MCF 10A (cell line): ENCODE measurements at regions of chr11 and their contacts with region 1.

Region 1: DNA sequence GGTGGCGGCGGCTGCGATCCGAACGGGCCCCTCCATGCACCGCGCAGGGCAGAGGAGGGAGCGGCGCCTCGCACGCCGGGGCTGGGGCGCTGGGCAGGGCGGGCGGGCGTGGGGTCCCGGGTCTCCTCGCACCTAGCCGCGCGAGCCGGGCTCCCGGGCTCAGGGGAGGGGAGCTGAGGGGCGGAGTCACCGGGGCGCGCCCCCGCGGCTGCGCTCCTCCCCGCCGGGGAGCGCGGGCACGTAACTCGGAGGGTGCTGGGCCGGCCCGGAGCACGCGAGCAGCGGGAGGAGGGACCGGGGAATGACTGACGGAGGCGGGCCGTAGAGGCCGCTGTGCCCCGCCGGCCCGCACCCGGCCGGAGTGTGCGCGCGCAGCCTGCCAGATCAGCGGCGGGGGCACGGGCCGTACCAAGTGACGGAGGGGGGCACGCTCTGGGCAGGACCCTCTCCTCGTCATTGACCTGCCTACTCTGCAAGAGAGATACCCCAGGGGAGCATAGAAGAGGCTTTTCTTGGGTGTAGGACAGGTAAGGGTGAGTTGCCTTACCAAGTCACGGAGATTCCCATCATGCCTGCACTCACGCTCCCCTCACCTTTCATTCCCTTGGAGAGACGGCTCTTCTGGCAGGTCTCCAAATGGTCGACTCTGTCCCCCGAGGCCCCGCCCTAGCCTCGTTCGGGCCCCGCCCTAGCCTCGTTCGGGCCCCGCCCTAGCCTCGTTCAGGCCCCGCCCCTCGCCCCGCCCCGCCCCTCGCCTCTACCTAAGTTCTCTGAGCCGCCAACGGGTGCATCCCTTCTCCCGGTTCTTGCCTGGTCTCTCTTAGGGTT is at the start of gene CDON:
- DNase-seq: peak; percentile 92
- H3K4me3 Mint-ChIP-seq: peak within 1 kb of the TSS; percentile 74
- H3K27ac Mint-ChIP-seq: peak within 1 kb of the TSS; percentile 98
- H3K4me1 Mint-ChIP-seq: peaks cover 6% of the 10 kb centered on the region
- H3K27me3 Mint-ChIP-seq: no peaks in the 10 kb centered on the region
- CTCF ChIP-seq: no peak
- total RNA-seq, gene CDON: 0.91 and 0.96 TPM in 2 replicates

Region 2: GRCh38 chr11:125239585-125240560 is 823.0 kb before region 1 on chr11:
- CTCF ChIA-PET with region 1: no interaction called
- POLR2A ChIA-PET with region 1: no interaction called
- intact Hi-C with region 1: no loop called
- DNase-seq: no peak
- H3K4me3 Mint-ChIP-seq: no peak overlapping the region
- H3K27ac Mint-ChIP-seq: no peak overlapping the region
- H3K4me1 Mint-ChIP-seq: no peaks in the 10 kb centered on the region
- H3K27me3 Mint-ChIP-seq: peaks cover 34% of the 10 kb centered on the region
- CTCF ChIP-seq: no peak

Region 3: GRCh38 chr11:125799808-125800207 is 263.1 kb before region 1 on chr11:
- CTCF ChIA-PET with region 1: no interaction called
- POLR2A ChIA-PET with region 1: no interaction called
- intact Hi-C with region 1: no loop called
- DNase-seq: no peak
- H3K4me3 Mint-ChIP-seq: no peak overlapping the region
- H3K27ac Mint-ChIP-seq: no peak overlapping the region
- H3K4me1 Mint-ChIP-seq: no peaks in the 10 kb centered on the region
- H3K27me3 Mint-ChIP-seq: no peaks in the 10 kb centered on the region
- CTCF ChIP-seq: no peak

Region 4: DNA sequence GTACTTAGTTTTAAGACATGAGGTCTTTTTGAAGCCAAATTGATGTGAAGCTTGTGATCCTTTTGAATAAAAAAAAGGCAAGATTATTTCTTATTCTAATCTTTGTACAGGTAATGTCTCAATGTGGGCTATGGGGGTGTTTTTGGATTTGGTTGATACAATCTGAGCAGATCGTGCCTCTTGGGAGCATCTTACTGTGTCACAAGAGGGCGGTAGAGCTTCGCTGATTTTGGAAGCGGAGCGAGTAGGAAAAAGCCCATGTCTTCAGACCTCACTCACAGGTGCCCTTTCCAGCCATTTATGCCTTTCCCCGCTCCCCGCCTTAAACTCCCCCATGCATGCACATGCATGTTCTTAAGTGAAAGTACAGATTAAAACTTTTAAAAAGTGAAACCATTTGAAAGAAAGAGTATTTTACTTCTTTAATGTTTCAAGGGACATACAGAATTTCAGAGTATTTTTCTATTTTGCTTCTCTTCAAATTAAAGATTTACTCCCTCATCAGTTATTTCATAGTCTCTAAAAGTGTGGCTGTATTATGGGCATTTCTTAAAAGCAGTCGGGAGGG is 139.8 kb before region 1 on chr11:
- CTCF ChIA-PET with region 1: interaction called, 72 read pairs
- POLR2A ChIA-PET with region 1: interaction called, 4 read pairs
- intact Hi-C with region 1: loop called (anchors 1 kb)
- DNase-seq: peak; percentile 77
- H3K4me3 Mint-ChIP-seq: no peak overlapping the region
- H3K27ac Mint-ChIP-seq: no peak overlapping the region
- H3K4me1 Mint-ChIP-seq: peaks cover 8% of the 10 kb centered on the region
- H3K27me3 Mint-ChIP-seq: peaks cover 53% of the 10 kb centered on the region
- CTCF ChIP-seq: peak; percentile 83

Region 5: DNA sequence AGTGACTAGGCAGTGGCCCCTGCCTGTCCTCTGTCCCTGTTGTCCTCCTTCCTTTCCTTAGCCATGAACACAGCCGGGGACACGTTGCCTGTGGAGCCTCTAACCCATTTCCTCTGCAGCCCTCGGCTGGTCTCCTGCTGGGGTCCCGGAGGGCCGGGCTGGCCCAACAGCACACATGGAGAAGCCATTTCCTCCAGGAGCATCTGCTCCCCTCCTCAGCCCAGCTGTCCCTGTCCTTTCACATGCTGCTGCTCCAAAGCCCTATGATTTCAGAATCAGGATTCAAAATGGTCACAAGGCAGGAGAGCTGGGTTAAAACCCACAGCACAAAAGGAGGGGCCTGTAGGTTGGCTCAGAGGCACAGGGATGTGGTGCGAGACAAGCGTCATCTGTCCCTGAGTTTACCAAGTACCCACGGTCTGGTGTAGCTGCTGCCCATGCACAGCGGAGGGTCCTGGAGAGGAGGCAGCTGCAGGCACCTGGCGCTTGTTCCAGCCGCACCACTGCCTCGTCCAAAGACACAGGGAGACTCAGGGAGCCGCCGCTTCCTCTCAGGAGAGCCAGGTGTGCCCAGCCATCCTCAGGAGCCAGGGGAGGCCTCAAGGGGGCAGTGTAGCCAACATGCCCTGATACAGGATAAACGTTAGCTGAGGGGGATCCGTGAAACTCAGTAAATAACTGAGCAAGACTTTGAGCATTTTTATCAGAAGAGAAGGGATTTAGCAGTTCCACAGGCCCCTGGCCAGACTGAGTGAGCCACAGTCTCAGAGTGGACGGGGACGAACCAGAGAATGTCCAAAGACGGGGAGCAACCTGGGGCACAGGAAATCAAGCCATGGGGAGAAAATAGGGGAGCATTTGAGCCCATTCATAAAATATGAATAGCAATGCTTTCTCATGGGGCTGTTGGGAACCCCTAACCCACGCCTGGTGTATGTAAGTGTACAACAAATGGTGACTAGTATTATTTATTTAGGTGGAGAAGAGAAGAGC is 121.0 kb before region 1 on chr11:
- CTCF ChIA-PET with region 1: interaction called, 137 read pairs
- POLR2A ChIA-PET with region 1: interaction called, 14 read pairs
- intact Hi-C with region 1: loop called (anchors 1 kb)
- DNase-seq: peak; percentile 61
- H3K4me3 Mint-ChIP-seq: no peak overlapping the region
- H3K27ac Mint-ChIP-seq: peak overlapping the region; percentile 32
- H3K4me1 Mint-ChIP-seq: peaks cover 9% of the 10 kb centered on the region
- H3K27me3 Mint-ChIP-seq: no peaks in the 10 kb centered on the region
- CTCF ChIP-seq: peak; percentile 70

Region 6: GRCh38 chr11:125956391-125957134 is 106.3 kb before region 1 on chr11:
- CTCF ChIA-PET with region 1: interaction called, 14 read pairs
- POLR2A ChIA-PET with region 1: no interaction called
- intact Hi-C with region 1: no loop called
- DNase-seq: no peak
- H3K4me3 Mint-ChIP-seq: no peak overlapping the region
- H3K27ac Mint-ChIP-seq: no peak overlapping the region
- H3K4me1 Mint-ChIP-seq: peaks cover 6% of the 10 kb centered on the region
- H3K27me3 Mint-ChIP-seq: no peaks in the 10 kb centered on the region
- CTCF ChIP-seq: no peak

Region 7: GRCh38 chr11:126115816-126116331 is 53.0 kb after region 1 on chr11:
- CTCF ChIA-PET with region 1: interaction called, 14 read pairs
- POLR2A ChIA-PET with region 1: interaction called, 8 read pairs
- intact Hi-C with region 1: loop called (anchors 5 kb)
- DNase-seq: peak; percentile 71
- H3K4me3 Mint-ChIP-seq: no peak overlapping the region
- H3K27ac Mint-ChIP-seq: peak overlapping the region; percentile 14
- H3K4me1 Mint-ChIP-seq: peaks cover 24% of the 10 kb centered on the region
- H3K27me3 Mint-ChIP-seq: no peaks in the 10 kb centered on the region
- CTCF ChIP-seq: no peak

Region 8: GRCh38 chr11:126186708-126187529 is 124.0 kb after region 1 on chr11:
- CTCF ChIA-PET with region 1: interaction called, 30 read pairs
- POLR2A ChIA-PET with region 1: no interaction called
- intact Hi-C with region 1: loop called (anchors 5 kb)
- DNase-seq: no peak
- H3K4me3 Mint-ChIP-seq: no peak overlapping the region
- H3K27ac Mint-ChIP-seq: no peak overlapping the region
- H3K4me1 Mint-ChIP-seq: peaks cover 10% of the 10 kb centered on the region
- H3K27me3 Mint-ChIP-seq: no peaks in the 10 kb centered on the region
- CTCF ChIP-seq: no peak